Caco-2 (cell line): ENCODE measurements at regions of chr22 and their contacts with region 1.

Region 1: DNA sequence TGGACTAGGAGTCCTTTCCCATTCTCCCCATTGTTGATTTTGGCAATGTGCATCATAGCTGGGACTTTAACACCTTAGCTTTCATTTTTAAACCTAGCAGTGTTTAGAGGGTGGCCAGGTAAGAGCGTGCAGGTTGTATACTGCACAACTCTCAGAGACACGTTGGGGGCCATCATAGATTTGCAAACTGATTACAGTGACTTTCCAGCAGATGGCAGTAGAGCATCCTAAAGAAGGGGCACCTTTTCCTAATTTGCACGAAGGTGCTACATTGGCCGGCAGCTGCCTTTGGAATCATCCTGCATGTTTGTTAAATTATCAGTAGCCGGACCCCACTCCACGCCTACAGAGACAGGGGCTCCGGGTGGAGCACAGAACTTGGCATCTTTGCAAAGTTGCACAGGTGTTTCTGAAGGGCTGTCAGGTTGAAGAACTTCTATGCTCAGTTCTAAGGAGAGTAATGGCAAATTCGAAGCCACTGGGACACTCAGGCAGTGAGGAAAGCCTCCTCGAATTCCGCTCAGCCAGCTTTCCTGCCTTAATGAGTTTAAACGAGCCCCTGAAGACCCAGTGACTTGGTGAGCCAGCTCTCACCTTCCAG is 7.7 kb downstream of the LHFPL7 start:
- DNase-seq: peak in 1 of 2 experiments; percentile 71
- H3K4me3 ChIP-seq: no peak overlapping the region
- H3K4me3 Mint-ChIP-seq: no peak overlapping the region
- H3K27ac Mint-ChIP-seq: no peak overlapping the region
- H3K4me1 ChIP-seq: peaks cover 5% of the 10 kb centered on the region; the same call in 1 of the 2 replicates
- H3K4me1 Mint-ChIP-seq: peaks cover 1% of the 10 kb centered on the region
- H3K27me3 ChIP-seq: no peaks in the 10 kb centered on the region
- H3K27me3 Mint-ChIP-seq: no peaks in the 10 kb centered on the region
- CTCF ChIP-seq: peak; percentile 74 to 76

Region 2: GRCh38 chr22:25048659-25049647 is 110.1 kb after region 1 on chr22:
- CTCF ChIA-PET with region 1: interaction called, 7 read pairs
- POLR2A ChIA-PET with region 1: no interaction called
- intact Hi-C with region 1: loop called (anchors 1 kb)
- DNase-seq: peak; percentile 63 to 72
- H3K4me3 ChIP-seq: no peak overlapping the region
- H3K4me3 Mint-ChIP-seq: no peak overlapping the region
- H3K27ac Mint-ChIP-seq: no peak overlapping the region
- H3K4me1 ChIP-seq: peaks cover 24% of the 10 kb centered on the region
- H3K4me1 Mint-ChIP-seq: peaks cover 10% of the 10 kb centered on the region
- H3K27me3 ChIP-seq: no peaks in the 10 kb centered on the region
- H3K27me3 Mint-ChIP-seq: no peaks in the 10 kb centered on the region
- CTCF ChIP-seq: peak; percentile 82 to 88

Region 3: GRCh38 chr22:25057013-25057881 is 118.4 kb after region 1 on chr22:
- CTCF ChIA-PET with region 1: interaction called, 12 read pairs
- POLR2A ChIA-PET with region 1: no interaction called
- intact Hi-C with region 1: loop called (anchors 1 kb)
- DNase-seq: peak; percentile 76 to 87
- H3K4me3 ChIP-seq: no peak overlapping the region
- H3K4me3 Mint-ChIP-seq: no peak overlapping the region
- H3K27ac Mint-ChIP-seq: no peak overlapping the region
- H3K4me1 ChIP-seq: peaks cover 18% of the 10 kb centered on the region
- H3K4me1 Mint-ChIP-seq: peaks cover 10% of the 10 kb centered on the region
- H3K27me3 ChIP-seq: no peaks in the 10 kb centered on the region
- H3K27me3 Mint-ChIP-seq: no peaks in the 10 kb centered on the region
- CTCF ChIP-seq: peak; percentile 86 to 98